OCI-LY7 (cell line): ENCODE measurements at regions of chr22 and their contacts with region 1.

Region 1: DNA sequence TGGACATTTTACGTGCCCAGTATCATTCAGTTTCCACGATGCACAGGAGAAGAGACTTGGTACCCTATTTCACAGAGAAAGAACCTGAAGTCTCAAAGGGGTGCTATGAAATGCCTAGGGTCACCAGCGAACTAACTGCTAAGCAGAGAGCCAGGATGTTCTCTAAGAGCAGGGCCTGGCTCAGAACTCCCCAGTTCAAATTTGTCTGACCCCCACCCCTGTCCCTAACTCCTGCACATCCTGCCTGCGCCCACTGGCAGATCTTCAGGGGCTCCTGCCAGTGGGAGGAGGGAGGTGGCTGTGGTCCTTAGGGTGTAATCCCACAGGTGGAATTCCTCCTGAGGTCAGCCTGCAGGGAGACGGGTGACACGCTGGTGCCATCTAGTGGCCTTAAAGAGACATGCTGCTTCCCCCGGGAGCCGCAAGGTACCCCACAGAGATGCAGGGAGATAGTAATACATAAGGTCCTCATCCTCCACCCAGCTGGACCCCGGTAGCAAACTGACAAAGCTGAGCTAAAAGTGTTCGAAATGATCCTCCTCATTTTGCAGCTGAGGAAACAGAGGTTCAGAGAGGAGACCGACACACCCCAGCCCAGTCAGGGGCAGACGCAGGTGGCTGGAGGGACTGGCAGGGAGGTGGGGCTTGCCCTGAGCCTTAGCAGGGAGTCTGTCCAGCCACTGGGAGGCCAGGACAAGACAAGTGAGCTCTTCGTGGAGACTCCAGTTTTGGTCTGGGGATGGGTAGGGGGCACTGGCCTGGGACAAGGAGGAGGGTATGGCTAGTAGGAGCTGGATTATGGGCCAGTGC is 34.1 kb downstream of the MB start:
- DNase-seq: peak; percentile 77
- H3K4me3 ChIP-seq: no peak overlapping the region
- H3K27ac ChIP-seq: no peak overlapping the region
- H3K4me1 ChIP-seq: no peaks in the 10 kb centered on the region
- CTCF ChIP-seq: peak; percentile 99

Region 2: DNA sequence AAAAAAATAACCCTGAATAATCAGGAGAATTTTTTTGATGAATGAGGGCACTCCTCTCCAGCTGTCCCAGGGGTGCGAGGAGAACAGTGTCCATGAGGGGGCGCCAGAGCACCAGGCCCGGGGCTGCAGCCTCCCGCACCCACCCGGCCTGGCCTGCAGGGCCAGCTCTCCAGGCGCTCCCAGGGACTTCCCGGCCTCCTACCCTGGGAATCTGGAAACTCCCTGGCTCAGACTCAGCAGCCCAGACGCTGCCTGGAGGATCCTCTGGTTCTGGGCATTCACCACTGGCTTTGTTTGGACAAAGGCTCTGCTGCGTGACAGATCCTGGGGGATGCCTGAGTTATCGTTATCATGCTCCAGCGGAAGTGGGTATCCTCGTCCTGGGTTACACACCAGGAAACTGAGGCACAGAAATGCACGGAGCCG is 152.2 kb before region 1 on chr22:
- CTCF ChIA-PET with region 1: no interaction called
- POLR2A ChIA-PET with region 1: no interaction called
- intact Hi-C with region 1: loop called (anchors 1 kb)
- DNase-seq: peak; percentile 50
- H3K4me3 ChIP-seq: no peak overlapping the region
- H3K27ac ChIP-seq: no peak overlapping the region
- H3K4me1 ChIP-seq: no peaks in the 10 kb centered on the region
- CTCF ChIP-seq: peak; percentile 90

Region 3: GRCh38 chr22:35622191-35622913 is 39.3 kb after region 1 on chr22:
- CTCF ChIA-PET with region 1: no interaction called
- POLR2A ChIA-PET with region 1: no interaction called
- intact Hi-C with region 1: loop called (anchors 2 kb)
- DNase-seq: no peak
- H3K4me3 ChIP-seq: no peak overlapping the region
- H3K27ac ChIP-seq: no peak overlapping the region
- H3K4me1 ChIP-seq: peaks cover 12% of the 10 kb centered on the region
- CTCF ChIP-seq: no peak